Lower leg skin (tissue), 4 donors: ENCODE measurements at regions of chr4 and their contacts with region 1.

Region 1: GRCh38 chr4:87937523-87937922 is 38.0 kb upstream of the SPP1 start:
- DNase-seq: no peak
- H3K4me3 ChIP-seq: no peak overlapping the region
- CTCF ChIP-seq: no peak
- POLR2A ChIP-seq: no peak

Region 2: DNA sequence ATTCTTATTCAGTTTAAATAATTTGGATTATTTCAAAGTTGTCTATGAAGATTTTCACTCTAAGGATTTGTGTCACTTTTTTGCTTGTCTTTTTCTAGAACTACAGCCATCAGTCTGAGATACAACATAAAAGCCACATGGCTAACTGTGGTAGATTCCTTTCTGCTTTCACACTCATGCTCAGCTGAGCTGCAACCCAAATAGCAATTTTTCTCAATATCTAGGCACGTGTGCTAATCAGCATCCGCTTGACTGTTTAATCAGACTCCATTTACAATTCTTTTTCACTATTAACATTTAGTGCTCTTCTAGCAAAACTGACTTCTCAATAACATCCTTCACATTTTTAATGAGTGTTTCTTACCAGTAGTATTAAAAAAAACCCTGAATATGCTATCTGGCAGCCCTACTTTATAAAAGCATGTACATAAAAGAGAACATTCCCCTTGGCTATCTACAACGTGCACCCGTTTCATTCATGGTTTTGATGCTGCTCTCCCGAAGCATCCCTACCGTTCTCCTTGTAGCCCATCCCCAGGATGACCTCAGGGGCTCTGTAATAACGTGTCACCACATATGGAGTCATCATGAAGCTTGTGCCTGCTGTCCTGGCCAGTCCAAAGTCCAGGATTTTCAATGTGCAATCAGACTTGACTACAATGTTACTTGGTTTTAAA is 1836.8 kb before region 1 on chr4:
- intact Hi-C with region 1: no loop called
- DNase-seq: no peak
- H3K4me3 ChIP-seq: no peak overlapping the region
- CTCF ChIP-seq: no peak
- POLR2A ChIP-seq: no peak

Region 3: DNA sequence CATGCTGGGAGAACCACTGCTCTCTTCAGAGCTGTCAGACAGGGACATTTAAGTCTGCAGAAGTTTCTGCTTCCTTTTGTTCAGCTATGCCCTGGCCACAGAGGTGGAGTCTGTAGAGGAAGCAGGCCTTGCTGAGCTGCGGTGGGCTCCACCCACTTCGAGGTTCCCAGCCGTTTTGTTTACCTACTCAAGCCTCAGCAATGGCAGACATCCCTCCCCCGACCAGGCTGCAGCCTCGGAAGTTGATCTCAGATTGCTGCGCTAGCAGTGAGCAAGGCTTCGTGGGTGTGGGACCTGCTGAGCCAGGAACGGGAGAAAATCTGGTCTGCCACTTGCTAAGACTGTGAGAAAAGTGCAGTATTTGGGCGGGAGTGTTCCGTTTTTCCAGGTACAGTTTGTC is 1207.2 kb before region 1 on chr4:
- intact Hi-C with region 1: no loop called
- DNase-seq: no peak
- H3K4me3 ChIP-seq: no peak overlapping the region
- CTCF ChIP-seq: no peak
- POLR2A ChIP-seq: no peak

Region 4: DNA sequence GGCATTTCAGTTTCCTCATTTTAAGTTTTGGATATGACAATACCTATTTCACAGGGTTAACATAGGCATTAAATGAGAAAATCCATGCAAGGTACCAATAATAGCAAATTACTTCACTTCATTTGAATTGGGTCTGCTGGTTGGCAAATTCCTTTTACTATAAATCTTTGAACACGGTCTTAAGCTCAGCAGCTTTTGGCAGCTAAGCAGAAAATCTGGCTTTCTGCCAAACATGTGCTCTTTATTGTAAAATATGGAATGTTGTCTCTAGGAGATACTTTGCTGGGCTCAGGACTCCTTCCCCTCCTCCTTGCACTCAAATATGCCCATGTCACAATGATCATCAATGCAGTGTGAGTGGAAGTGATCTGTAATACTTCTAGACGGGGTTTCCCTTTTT is 304.3 kb before region 1 on chr4:
- intact Hi-C with region 1: no loop called
- DNase-seq: no peak
- H3K4me3 ChIP-seq: no peak overlapping the region
- CTCF ChIP-seq: no peak
- POLR2A ChIP-seq: no peak

Region 5: DNA sequence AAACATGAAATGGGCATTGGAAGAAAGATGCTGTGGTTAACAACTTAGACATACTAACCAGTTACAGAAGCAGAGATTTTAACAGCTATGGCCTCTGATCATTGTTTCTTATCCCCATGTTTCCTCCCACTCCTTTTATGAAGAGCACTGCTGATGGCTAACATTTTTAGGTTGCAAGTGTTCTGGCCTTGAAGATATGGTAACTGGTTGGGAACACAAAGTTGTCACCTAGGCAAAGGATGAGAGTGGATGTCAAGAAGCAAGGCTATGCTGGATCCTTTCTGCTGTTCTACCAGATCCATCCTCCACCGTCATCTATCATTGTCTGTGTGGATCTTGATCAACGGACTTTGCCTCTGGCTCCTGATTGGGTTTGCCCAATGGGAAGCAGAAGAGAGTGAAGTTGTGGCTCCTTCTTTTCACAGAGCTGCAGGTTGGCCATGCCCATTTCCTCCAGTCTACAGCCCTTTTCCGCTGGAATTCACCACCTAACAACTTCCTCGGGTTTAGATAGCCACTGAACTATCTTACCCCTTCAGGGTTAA is 10.9 kb before region 1 on chr4:
- intact Hi-C with region 1: loop called (anchors 1 kb)
- DNase-seq: no peak
- H3K4me3 ChIP-seq: no peak overlapping the region
- CTCF ChIP-seq: no peak
- POLR2A ChIP-seq: no peak